Activated T-helper 1 cell treated with anti-CD3 and anti-CD28 coated beads, Interleukin-12 subunit alpha, Interleukin-12 subunit beta, Interleukin-2, Interleukin-4 antibody, amounts not matched to agents 30 ng/mL and 10 ng/mL and 1 ng/mL, durations not matched to agents 14 hours and 24 hours and 36 hours (primary cell): ENCODE measurements at regions of chr4 and their contacts with region 1.

Region 1: GRCh38 chr4:147866532-147867271 is 134.8 kb downstream of the ARHGAP10 start:
- DNase-seq: peak; percentile 79
- H3K4me3 Mint-ChIP-seq: no peak overlapping the region
- H3K27ac Mint-ChIP-seq: no peak overlapping the region
- H3K4me1 Mint-ChIP-seq: peaks cover 8% of the 10 kb centered on the region
- H3K27me3 Mint-ChIP-seq: no peaks in the 10 kb centered on the region

Region 2: DNA sequence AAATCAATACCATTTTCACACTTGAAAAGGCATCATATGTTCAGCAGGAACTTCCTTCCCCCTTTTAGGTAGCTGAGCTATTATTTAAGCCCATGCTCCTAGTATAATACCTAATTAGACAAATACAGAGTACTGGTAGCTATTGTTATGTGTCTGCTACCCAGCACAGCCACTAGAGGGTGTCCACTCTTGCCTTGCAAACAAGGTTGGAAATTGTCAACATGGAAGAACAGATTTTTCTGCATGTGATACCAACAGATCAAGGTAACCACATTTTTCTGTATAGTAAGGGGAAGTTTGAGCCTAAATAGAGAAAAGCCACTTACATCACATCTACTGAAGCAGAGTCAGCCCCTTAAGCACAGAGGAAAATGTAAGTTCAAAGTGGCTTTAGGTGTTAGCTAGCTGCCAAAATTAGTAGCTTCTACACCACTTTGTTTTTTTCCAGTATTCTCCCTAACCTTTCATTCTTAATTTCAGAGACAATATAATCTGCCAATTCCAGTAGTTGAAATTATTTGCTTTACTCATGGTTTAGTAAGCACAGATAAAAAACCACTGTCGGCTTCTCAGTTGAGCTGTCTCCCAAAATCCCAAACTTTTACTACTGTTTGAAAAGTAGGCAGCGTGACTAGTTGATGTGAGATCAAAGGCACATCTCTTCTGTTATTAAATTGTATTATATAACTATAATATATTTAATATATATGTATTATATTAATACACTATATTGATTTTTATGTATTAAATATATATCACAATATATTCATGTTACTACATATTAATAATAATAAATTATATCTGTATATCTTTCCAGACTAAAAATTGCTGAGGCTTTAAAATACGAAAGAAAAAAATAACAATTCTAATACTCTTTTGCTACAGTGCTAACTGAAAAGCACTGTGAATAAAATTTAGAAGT is 347.6 kb before region 1 on chr4:
- intact Hi-C with region 1: loop called (anchors 1 kb)
- DNase-seq: peak; percentile 14
- H3K4me3 Mint-ChIP-seq: no peak overlapping the region
- H3K27ac Mint-ChIP-seq: no peak overlapping the region
- H3K4me1 Mint-ChIP-seq: no peaks in the 10 kb centered on the region
- H3K27me3 Mint-ChIP-seq: peaks cover 8% of the 10 kb centered on the region

Region 3: DNA sequence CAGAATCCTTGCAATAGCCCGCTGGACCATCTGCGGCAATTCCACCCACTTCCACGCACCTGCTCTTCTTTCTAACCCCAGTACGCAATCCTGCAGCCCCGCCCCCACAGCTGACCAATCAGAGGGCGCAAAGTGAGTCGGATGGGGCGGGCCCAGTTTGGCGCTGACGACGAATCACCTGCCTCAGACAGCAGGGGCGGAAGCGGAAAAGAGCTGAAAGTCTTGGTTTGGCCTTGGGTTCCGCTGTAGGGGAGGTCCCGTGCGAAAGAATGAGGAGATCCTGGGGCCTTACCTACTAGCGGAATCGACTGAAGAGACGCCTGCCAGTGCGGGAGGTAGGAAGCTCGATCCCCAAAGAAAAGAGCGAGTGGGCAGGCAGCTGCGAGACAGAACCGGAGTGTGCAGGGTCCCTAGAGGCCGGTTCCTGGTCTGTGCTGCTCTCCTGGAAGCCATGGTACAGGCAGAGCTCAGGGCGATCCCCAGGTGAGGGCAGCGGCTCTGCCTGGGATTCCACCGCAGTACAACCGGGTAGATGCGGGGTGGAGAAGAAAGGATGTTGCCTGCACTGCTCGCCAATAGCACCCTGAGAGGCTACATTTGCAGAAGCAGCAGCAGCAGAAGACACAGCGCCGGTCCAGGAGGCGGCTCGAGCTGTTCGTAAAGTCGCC is 249.4 kb before region 1 on chr4 and contains the start of gene TMEM184C:
- intact Hi-C with region 1: loop called (anchors 1 kb)
- DNase-seq: peak; percentile 97
- H3K4me3 Mint-ChIP-seq: peak within 1 kb of the TSS; percentile 92
- H3K27ac Mint-ChIP-seq: peak within 1 kb of the TSS; percentile 89
- H3K4me1 Mint-ChIP-seq: peaks cover 26% of the 10 kb centered on the region
- H3K27me3 Mint-ChIP-seq: peaks cover 7% of the 10 kb centered on the region
- total RNA-seq, gene TMEM184C: 21.6 and 22.7 TPM in 2 replicates

Region 4: DNA sequence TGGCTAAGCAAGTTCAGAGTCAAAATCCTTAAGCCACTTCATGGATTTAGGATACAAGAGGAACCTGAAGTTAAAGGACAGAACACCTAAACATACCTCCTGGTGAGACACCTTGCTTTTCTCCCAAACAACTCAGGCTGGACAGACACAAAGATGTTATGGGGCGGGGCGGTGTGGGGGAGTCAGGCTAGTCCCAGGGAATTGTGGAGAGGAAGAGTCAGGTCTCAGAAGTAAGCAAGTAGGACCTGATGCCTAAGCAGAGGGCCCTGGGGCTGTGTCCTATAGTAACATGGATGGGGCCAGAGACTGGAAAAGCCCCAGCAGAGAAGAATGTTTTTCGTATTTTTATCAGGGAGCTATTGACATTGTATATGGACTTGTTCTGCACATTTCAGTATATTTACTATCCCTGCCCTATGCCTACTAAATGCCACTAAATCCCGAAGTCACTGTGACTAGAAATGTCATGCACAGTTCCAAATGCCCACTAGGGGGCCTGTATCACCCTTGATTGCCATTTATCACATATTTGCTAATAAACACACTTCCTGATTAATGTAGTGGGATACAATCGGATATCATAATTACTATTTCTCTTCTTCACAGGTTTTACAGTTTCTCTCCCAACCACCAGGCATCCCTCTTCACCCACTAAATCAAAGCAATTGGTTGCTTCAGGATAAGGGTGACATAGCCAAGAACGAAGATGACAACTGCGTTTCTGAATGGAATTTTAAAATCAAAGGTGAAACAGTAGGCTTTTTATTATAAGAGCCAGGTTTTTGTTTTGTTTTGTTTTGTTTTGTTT is 158.6 kb before region 1 on chr4:
- intact Hi-C with region 1: loop called (anchors 1 kb)
- DNase-seq: peak; percentile 17
- H3K4me3 Mint-ChIP-seq: no peak overlapping the region
- H3K27ac Mint-ChIP-seq: no peak overlapping the region
- H3K4me1 Mint-ChIP-seq: no peaks in the 10 kb centered on the region
- H3K27me3 Mint-ChIP-seq: peaks cover 4% of the 10 kb centered on the region